ENCODE measurements at regions of chr20 and their contacts with region 1.

Region 1: DNA sequence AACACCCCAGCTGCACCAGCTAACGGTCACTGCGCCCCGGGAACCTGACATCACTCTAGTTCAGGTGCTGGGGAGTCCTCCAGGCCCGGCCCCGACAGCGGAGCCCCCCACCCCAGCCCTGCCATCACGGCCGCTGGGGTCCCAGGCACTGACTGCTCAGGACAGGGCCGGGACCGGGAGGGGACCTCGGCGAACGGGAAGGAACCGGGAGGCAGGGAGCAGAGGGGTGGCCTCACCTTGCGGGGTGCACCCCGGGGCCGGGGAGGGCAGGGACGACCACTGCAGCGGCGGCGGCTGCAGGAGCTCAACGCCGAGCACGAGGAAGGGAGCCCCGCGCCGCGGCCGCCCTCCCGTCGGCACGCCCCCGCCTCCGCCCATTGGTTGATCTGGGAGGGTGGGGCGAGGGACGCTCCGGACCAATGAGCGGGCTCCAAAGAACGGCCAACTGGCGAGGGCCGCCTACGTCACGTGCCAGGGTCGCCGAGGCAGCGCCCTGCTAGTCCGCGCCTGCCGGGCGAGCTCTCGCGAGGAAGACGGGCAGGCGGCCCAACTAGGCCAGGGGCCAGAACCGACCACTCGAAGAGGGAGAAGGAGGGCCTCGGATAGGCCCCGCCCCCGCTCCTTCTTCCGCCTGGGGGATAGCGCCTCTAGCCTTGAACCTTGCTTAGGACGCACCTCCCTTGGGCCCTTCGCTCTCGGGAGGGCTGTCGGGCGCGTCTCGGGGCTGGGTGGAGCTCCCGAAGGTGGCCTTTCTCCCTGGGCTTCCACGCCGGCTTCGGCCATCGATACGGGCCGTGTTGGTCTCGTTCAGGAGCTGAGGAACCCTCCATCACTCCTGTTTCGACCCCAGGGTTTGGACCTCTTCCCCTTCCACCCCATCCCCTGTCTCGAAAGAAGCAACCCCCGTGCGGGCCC is at the start of gene ADISSP:
- H3K4me3 ChIP-seq: peak within 1 kb of the TSS; percentile 74
- H3K27ac ChIP-seq: peak within 1 kb of the TSS; percentile 68
- H3K4me1 ChIP-seq: peaks cover 7% of the 10 kb centered on the region
- CTCF ChIP-seq: peak; percentile 44; the same call in 1 of the 2 replicates

Region 2: DNA sequence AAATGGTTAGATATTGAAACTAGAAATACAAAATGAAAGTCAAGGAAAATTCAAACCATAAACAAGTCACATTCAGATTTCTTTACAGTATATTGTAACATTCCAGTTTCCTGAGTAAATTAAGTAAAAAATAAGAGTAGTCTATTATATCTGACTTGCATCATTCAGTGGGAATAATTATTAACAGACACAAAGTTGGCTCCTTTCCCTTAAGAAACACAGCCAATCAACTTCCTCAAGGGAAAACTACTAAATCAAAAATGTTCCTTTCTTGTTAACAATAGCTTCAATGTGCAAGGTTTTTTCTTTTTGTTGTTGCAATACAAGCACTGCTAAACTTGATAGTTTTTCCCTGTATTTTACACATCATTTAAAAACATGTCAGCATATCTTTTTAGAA is 393.4 kb before region 1 on chr20:
- CTCF ChIA-PET with region 1: no interaction called
- POLR2A ChIA-PET with region 1: no interaction called
- H3K4me3 ChIP-seq: no peak overlapping the region
- H3K27ac ChIP-seq: no peak overlapping the region
- H3K4me1 ChIP-seq: no peaks in the 10 kb centered on the region
- CTCF ChIP-seq: no peak

Region 3: DNA sequence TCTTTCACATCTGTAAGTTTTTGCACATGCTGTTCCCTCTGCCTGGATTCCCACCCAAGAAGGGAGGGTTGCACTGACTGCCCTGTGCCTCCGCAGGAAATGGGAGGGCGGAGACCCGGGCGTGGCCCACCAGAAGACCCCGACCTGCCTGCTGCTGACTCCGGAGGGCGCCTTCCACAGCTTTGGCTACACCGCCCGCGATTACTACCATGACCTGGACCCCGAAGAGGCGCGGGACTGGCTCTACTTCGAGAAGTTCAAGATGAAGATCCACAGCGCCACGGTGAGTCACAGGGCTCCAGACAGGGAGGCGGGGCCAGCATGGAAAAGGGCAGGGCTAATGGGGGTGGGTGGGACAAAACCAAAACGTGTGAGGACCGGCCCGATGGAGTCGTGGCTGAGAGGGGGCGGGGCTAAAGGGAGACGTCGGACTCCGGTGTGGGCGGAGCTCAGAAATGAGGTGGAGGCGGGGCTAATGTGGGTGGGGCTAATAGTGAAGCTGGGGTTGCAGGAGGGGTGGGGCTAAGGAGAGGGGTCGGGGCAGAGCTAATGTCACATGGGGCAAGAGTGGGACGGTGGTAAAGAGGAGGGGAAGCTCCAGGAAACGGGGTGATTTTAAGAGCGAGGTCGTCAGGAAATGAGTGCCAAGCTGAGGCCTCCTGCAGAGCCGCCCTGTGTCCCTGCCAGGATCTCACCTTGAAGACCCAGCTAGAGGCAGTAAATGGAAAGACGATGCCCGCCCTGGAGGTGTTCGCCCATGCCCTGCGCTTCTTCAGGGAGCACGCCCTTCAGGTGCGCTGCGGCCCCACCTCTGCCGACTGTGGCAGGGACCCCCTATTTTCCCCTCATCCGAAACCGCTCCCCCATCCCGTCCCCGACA is 22.6 kb before region 1 on chr20:
- CTCF ChIA-PET with region 1: interaction called, 133 read pairs
- POLR2A ChIA-PET with region 1: interaction called, 19 read pairs
- H3K4me3 ChIP-seq: no peak overlapping the region
- H3K27ac ChIP-seq: no peak overlapping the region
- H3K4me1 ChIP-seq: no peaks in the 10 kb centered on the region
- CTCF ChIP-seq: no peak

Region 4: DNA sequence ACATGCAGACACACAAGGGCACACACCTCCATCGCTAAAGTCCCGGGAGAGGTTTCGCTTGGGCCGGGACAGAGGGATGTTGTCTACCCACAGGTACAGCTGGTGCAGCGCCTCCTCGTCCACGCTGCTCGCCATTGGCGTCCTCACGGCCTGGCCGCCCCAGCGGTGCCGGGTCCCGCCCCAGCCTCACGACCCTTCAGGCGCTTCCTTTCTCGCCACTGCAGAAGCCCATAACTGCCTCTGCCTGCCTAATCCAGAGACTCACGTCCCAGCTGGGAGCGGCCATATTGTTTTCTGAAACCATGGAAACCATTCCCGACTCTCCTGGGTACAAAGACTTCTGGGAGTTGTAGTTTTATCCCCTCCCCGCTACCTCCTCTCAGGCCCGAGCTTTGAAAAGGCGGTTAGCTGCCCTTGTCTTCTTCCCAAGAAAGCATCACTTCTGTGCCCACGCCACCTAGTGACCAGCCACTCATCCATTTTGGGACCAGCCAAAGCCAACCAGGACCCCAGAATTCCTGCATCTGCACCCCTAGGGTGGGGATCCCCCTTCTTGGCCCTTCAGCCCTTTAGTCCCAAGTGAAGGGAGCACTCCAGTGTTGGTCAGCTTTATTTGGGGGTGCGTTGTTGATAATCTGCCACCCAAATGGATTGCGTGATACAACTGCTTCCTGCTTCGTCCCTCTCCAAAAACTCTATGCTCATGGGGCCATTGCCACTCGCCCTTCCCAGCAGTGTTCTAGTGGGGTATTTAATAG is 13.6 kb after region 1 on chr20 and contains the start of gene SPEF1:
- CTCF ChIA-PET with region 1: interaction called, 12 read pairs
- POLR2A ChIA-PET with region 1: interaction called, 36 read pairs
- H3K4me3 ChIP-seq: peak within 1 kb of the TSS; percentile 41
- H3K27ac ChIP-seq: no peak within 1 kb of the TSS
- H3K4me1 ChIP-seq: peaks cover 13% of the 10 kb centered on the region; the same call in 1 of the 2 replicates
- CTCF ChIP-seq: peak; percentile 86

Region 5: DNA sequence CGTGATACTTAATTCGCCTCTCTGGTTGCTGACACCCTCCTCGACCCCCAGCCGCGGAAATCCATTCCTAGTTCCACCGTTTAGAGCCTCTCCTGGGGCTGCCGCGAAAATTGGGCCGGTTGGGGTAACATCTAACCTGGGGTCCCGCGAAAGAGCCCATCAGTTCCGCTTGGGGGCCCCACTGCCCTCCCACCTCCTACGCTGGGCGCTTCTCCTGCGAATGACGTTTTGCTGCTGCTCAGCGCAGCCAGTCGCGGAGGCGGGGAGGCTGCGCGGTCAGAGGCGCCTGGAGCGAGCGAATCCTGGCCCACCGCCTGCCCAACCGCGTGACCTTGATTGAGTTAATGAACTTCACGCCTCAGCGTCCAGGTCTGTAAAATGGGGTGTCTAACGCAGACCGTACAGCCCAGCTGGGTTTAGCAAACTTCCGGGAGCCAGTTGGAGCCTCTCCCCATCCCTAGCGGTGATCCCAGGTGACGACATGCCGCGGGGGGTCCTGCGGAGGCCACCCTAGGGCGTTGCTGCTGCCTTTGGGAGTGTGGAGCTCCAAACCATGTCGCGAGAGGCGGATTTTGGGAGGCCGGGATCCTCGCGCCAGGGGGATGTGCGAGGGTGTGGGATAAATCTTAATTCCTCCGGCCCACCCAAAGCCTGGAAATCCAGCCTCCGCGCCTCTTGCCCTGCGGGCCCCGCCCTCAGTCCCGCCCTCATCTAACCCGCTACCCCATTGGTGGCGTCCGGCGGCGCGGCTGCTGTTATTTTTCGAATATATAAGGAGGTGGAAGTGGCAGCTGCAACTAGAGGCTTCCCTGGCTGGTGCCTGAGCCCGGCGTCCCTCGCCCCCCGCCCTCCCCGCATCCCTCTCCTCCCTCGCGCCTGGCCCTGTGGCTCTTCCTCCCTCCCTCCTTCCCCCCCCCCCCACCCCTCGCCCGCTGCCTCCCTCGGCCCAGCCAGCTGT is 28.1 kb after region 1 on chr20 and contains the start of gene CDC25B:
- CTCF ChIA-PET with region 1: interaction called, 6 read pairs
- POLR2A ChIA-PET with region 1: interaction called, 14 read pairs
- H3K4me3 ChIP-seq: peak within 1 kb of the TSS; percentile 83
- H3K27ac ChIP-seq: peak within 1 kb of the TSS; percentile 92
- H3K4me1 ChIP-seq: peaks cover 12% of the 10 kb centered on the region
- CTCF ChIP-seq: peak; percentile 59

Region 6: GRCh38 chr20:3811467-3812258 is 44.0 kb after region 1 on chr20:
- CTCF ChIA-PET with region 1: interaction called, 3 read pairs
- POLR2A ChIA-PET with region 1: interaction called, 12 read pairs
- H3K4me3 ChIP-seq: peak overlapping the region; percentile 17
- H3K27ac ChIP-seq: peak overlapping the region; percentile 84
- H3K4me1 ChIP-seq: peaks cover 35% of the 10 kb centered on the region
- CTCF ChIP-seq: peak; percentile 9; the same call in 1 of the 2 replicates